ENCODE measurements at regions of chr2 and their contacts with region 1.

Region 1: GRCh38 chr2:196926562-196927375 is at the start of gene PGAP1:
- DNase-seq: peak; percentile 87
- H3K4me3 Mint-ChIP-seq: peak within 1 kb of the TSS; percentile 95
- H3K27ac Mint-ChIP-seq: peak within 1 kb of the TSS; percentile 99
- H3K4me1 Mint-ChIP-seq: peaks cover 45% of the 10 kb centered on the region
- H3K27me3 Mint-ChIP-seq: peaks cover 1% of the 10 kb centered on the region
- total RNA-seq, gene PGAP1: 30.1 TPM in 2 replicates

Region 2: DNA sequence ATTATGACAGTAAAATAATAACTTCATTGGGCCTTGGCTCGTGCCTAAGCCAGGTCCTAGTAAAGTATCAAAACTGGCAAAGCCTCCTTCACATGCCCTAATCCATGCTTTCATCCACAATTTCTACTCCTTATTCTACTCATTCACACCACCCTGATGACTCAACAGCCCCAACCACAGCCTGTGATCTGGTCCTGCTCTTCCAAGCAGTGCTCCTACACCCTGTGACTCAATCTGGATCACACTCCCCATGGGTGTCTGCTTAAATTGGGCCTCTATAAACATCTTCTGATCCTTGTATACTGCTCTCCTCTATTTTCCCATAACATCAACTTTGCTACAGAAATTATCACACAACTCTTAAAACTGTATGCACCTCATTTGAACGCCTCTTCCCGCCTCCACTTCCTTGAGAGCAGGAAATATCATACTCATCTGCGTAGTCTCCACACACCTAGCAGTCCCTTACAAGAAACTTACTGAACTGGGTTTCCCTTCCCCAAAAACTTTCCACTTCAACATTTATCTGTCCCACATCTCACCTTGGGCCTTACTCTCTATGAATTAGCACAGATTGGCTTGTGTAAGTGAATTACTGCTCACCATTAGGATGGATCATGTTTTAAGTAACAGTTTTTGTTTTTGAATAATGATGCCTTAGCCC is 143.2 kb before region 1 on chr2:
- intact Hi-C with region 1: loop called (anchors 1 kb)
- DNase-seq: no peak
- H3K4me3 Mint-ChIP-seq: peak overlapping the region; percentile 12
- H3K27ac Mint-ChIP-seq: peak overlapping the region; percentile 80
- H3K4me1 Mint-ChIP-seq: peaks cover 22% of the 10 kb centered on the region
- H3K27me3 Mint-ChIP-seq: no peaks in the 10 kb centered on the region

Region 3: GRCh38 chr2:196887431-196887830 is 39.3 kb before region 1 on chr2:
- intact Hi-C with region 1: loop called (anchors 2 kb)
- DNase-seq: no peak
- H3K4me3 Mint-ChIP-seq: no peak overlapping the region
- H3K27ac Mint-ChIP-seq: no peak overlapping the region
- H3K4me1 Mint-ChIP-seq: peaks cover 5% of the 10 kb centered on the region
- H3K27me3 Mint-ChIP-seq: no peaks in the 10 kb centered on the region

Region 4: DNA sequence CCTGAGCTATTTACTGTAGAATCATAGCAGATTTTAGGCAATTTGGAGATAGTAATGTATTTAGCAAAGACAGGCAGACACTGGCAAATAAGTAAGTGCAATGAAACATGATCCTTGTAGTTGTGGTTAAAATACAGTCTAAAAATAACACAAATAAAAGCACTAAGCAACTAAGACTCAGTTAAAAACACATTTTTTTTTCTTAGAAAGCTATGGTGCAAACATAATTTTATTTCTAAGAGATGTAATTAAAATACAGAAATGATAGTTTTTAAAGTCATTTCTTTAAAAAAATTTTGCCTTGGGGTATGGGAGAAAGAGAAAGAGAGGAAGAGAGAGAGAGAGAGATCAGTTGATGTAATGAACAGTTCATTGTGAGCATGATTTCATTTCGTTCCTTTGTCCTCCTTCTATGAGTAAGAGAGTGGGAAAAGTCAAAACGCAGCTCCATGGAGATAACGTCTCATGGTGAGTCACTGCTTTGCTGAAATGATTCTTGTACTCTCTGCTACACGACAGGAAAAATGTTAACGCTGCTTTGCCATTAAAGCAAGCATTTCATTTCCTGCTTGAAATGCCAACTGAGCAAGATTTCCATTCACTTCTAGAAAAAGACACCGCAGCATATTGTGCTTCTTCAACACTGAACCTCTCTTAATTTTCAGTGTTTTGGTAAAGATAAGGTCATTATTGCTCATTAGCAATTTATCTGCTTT is 61.0 kb after region 1 on chr2:
- intact Hi-C with region 1: loop called (anchors 1 kb)
- DNase-seq: peak; percentile 46
- H3K4me3 Mint-ChIP-seq: peak overlapping the region; percentile 66
- H3K27ac Mint-ChIP-seq: peak overlapping the region; percentile 94
- H3K4me1 Mint-ChIP-seq: peaks cover 62% of the 10 kb centered on the region
- H3K27me3 Mint-ChIP-seq: no peaks in the 10 kb centered on the region

Region 5: GRCh38 chr2:197001921-197002320 is 75.2 kb after region 1 on chr2:
- intact Hi-C with region 1: no loop called
- DNase-seq: no peak
- H3K4me3 Mint-ChIP-seq: no peak overlapping the region
- H3K27ac Mint-ChIP-seq: no peak overlapping the region
- H3K4me1 Mint-ChIP-seq: no peaks in the 10 kb centered on the region
- H3K27me3 Mint-ChIP-seq: no peaks in the 10 kb centered on the region

Region 6: GRCh38 chr2:197434541-197435513 is 508.1 kb after region 1 on chr2 and contains the start of gene SF3B1:
- intact Hi-C with region 1: loop called (anchors 5 kb)
- DNase-seq: peak; percentile 99
- H3K4me3 Mint-ChIP-seq: peak within 1 kb of the TSS; percentile 95
- H3K27ac Mint-ChIP-seq: peak within 1 kb of the TSS; percentile 99
- H3K4me1 Mint-ChIP-seq: peaks cover 50% of the 10 kb centered on the region
- H3K27me3 Mint-ChIP-seq: no peaks in the 10 kb centered on the region
- total RNA-seq, gene SF3B1: 247 and 268 TPM in 2 replicates

Region 7: GRCh38 chr2:197705121-197705911 is 778.5 kb after region 1 on chr2 and contains the start of gene MARS2:
- intact Hi-C with region 1: loop called (anchors 5 kb)
- DNase-seq: peak; percentile 91
- H3K4me3 Mint-ChIP-seq: peak within 1 kb of the TSS; percentile 94
- H3K27ac Mint-ChIP-seq: peak within 1 kb of the TSS; percentile 85
- H3K4me1 Mint-ChIP-seq: peaks cover 60% of the 10 kb centered on the region
- H3K27me3 Mint-ChIP-seq: peaks cover 3% of the 10 kb centered on the region
- total RNA-seq, gene MARS2: 22.6 and 22.9 TPM in 2 replicates

Measured in activated T-helper 1 cell treated with anti-CD3 and anti-CD28 coated beads, Interleukin-12 subunit alpha, Interleukin-12 subunit beta, Interleukin-2, Interleukin-4 antibody, amounts not matched to agents 30 ng/mL and 10 ng/mL and 1 ng/mL, durations not matched to agents 14 hours and 24 hours and 36 hours (primary cell).